Activated CD4-positive, alpha-beta T cell treated with anti-CD3 and anti-CD28 coated beads for 36 hours (primary cell): ENCODE measurements at regions of chr22 and their contacts with region 1.

Region 1: GRCh38 chr22:23913661-23914353 is 19.6 kb downstream of the MIF start:
- DNase-seq: peak; percentile 100
- ATAC-seq: peak; percentile 99
- H3K4me3 Mint-ChIP-seq: peak overlapping the region; percentile 85
- H3K27ac Mint-ChIP-seq: peak overlapping the region; percentile 98
- H3K4me1 Mint-ChIP-seq: peaks cover 23% of the 10 kb centered on the region
- H3K27me3 Mint-ChIP-seq: no peaks in the 10 kb centered on the region

Region 2: DNA sequence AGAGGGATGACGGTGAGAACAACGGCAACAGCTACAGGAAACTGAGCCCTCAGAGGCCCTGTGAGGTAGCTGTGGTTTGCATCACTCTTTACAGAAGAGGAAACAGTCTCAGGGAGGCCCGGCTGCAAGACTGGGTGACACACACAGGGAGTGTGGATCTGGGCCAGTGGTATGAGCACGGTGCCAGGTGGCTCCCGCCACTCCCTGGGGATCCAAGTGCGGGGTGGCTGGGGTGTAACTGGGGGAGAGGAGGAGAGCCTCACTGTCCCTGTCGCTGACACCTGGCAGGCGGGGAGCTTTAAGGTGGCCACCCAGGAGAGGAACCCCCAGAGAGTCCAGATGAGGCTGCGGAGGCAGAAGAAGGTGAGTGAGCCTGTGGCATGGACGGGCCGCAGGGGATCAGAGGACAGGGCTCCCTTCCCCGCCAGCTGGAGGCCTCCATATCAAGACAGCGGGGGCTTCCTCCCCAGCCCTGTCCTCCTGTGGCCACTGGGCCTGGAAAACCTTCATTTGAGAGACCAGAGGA is 217.4 kb before region 1 on chr22:
- CTCF ChIA-PET with region 1: no interaction called
- POLR2A ChIA-PET with region 1: no interaction called
- intact Hi-C with region 1: no loop called
- DNase-seq: peak; percentile 91
- ATAC-seq: peak; percentile 100
- H3K4me3 Mint-ChIP-seq: peak overlapping the region; percentile 90
- H3K27ac Mint-ChIP-seq: peak overlapping the region; percentile 100
- H3K4me1 Mint-ChIP-seq: peaks cover 47% of the 10 kb centered on the region
- H3K27me3 Mint-ChIP-seq: no peaks in the 10 kb centered on the region

Region 3: GRCh38 chr22:23750714-23751440 is 162.9 kb before region 1 on chr22 and contains the start of gene ZNF70:
- CTCF ChIA-PET with region 1: no interaction called
- POLR2A ChIA-PET with region 1: no interaction called
- intact Hi-C with region 1: loop called in 1 of 2 experiments (anchors 1 kb)
- DNase-seq: peak; percentile 91
- ATAC-seq: peak; percentile 99
- H3K4me3 Mint-ChIP-seq: peak within 1 kb of the TSS; percentile 77
- H3K27ac Mint-ChIP-seq: peak within 1 kb of the TSS; percentile 56
- H3K4me1 Mint-ChIP-seq: peaks cover 11% of the 10 kb centered on the region
- H3K27me3 Mint-ChIP-seq: peaks cover 2% of the 10 kb centered on the region
- total RNA-seq, gene ZNF70: 1.6 to 1.7 TPM

Region 4: DNA sequence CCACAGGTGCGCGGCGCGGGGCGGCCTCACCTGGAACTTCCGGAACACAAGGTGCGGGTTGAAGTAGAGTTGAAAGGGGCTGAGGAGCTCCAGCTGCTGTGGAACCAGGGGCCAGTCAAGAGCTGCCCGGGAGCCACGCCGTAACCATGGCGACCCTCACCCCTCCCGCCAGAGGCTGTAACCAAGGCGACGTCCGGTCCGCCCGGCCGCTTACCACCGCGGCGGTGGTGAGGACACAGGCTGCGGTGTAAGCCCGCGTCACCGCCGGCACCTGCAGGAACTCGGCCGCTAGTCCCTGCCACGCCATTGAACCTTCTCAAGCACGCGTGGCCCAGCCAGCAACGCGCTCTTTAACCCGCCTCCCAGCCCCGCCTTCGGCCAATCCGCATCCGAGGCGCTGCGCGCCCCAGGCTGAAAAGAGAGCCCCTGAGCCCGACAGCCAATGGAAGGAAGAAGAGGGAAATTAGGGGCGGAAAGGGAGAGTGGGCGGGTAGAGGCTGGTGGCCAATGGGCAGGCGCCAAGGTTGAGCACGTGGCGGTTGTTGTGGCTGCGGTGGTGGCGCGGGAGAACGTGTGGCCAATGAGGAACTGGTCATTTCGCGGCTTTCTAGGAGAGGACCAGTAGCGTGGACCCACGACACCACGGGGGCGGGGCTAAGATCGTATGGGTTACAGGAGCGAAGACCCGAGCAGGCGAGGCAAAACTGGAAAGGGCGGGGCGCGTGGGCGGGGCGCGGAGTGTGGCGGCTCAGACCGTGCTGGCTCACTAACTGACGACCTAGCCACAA is 74.9 kb before region 1 on chr22 and contains the start of gene DERL3:
- CTCF ChIA-PET with region 1: no interaction called
- POLR2A ChIA-PET with region 1: no interaction called
- intact Hi-C with region 1: loop called in 1 of 2 experiments (anchors 1 kb)
- DNase-seq: peak; percentile 97
- ATAC-seq: peak; percentile 94
- H3K4me3 Mint-ChIP-seq: peak within 1 kb of the TSS; percentile 83
- H3K27ac Mint-ChIP-seq: peak within 1 kb of the TSS; percentile 80
- H3K4me1 Mint-ChIP-seq: peaks cover 19% of the 10 kb centered on the region
- H3K27me3 Mint-ChIP-seq: peaks cover 2% of the 10 kb centered on the region
- total RNA-seq, gene DERL3: 5.2 to 5.7 TPM

Region 5: GRCh38 chr22:23857606-23858483 is 56.0 kb before region 1 on chr22 and contains the start of gene SLC2A11:
- CTCF ChIA-PET with region 1: no interaction called
- POLR2A ChIA-PET with region 1: interaction called, 4 read pairs
- intact Hi-C with region 1: loop called in 1 of 2 experiments (anchors 5 kb)
- DNase-seq: peak; percentile 97
- ATAC-seq: peak; percentile 97
- H3K4me3 Mint-ChIP-seq: peak within 1 kb of the TSS; percentile 80
- H3K27ac Mint-ChIP-seq: peak within 1 kb of the TSS; percentile 72
- H3K4me1 Mint-ChIP-seq: peaks cover 15% of the 10 kb centered on the region
- H3K27me3 Mint-ChIP-seq: no peaks in the 10 kb centered on the region
- total RNA-seq, gene SLC2A11: 7.6 to 7.7 TPM

Region 6: DNA sequence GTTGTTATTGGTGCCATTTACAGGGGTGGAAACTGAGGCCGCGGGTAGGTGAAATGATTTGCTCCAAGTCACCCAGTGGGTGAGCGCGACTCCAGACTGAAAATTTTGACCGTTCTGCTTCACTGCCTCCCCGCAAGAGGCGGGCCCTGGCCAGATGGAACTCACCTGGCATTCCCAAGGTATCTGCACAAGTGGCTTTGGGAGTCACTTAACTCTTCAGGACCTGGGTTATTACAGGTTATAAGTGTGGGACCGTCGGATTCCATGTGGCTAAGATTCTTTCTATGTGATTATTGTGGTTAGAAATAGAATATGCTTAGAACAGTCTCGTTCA is 97.9 kb after region 1 on chr22:
- CTCF ChIA-PET with region 1: no interaction called
- POLR2A ChIA-PET with region 1: interaction called, 3 read pairs
- intact Hi-C with region 1: loop called in 1 of 2 experiments (anchors 1 kb)
- DNase-seq: no peak
- ATAC-seq: no peak
- H3K4me3 Mint-ChIP-seq: peak overlapping the region; percentile 92
- H3K27ac Mint-ChIP-seq: peak overlapping the region; percentile 94
- H3K4me1 Mint-ChIP-seq: peaks cover 27% of the 10 kb centered on the region
- H3K27me3 Mint-ChIP-seq: no peaks in the 10 kb centered on the region